GM23248 (cell line): ENCODE measurements at regions of chr2 and their contacts with region 1.

Region 1: DNA sequence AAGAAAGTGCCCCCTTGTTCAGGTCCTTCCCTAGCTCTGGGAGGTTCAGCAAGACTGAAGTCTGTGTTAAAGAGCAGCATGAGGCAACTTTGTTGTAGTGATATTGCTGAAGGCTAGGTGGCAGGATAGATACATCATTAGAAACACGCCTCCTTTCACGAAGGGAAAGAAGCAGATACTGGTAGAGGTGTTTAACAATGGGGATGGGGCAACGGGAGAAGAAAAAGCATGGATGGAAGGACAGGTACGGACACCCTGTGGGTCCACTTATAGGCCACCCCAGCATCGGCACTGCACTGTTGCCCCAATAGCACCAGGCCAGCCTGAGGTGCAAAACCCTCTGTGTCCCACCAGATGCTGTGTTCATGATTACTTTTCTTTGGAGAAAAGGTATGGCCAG is 3.5 kb upstream of the IGFBP5 start:
- DNase-seq: peak; percentile 85
- H3K4me3 ChIP-seq: no peak overlapping the region
- H3K27ac ChIP-seq: no peak overlapping the region
- H3K4me1 ChIP-seq: peaks cover 17% of the 10 kb centered on the region
- H3K27me3 ChIP-seq: no peaks in the 10 kb centered on the region

Region 2: DNA sequence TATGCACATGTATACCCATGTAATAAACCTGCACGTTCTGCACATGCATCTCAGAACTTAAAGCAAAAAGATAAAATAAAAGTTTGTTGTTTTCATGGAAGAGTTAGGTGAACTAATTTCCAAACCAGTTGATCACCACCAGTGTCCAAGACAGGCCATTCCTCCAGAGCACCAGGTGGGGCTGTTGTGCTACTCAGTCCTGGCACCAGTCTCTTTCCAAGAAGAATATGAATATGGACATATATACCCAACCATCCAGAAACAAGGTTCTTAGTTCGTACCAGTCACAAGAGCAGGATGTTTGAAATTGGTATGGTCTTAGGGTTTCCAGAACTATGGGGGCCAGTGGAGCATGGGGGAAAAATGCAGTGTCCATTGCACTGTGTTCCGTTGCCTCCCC is 178.2 kb after region 1 on chr2:
- in situ Hi-C with region 1: no loop called
- DNase-seq: no peak
- H3K4me3 ChIP-seq: no peak overlapping the region
- H3K27ac ChIP-seq: no peak overlapping the region
- H3K4me1 ChIP-seq: no peaks in the 10 kb centered on the region
- H3K27me3 ChIP-seq: no peaks in the 10 kb centered on the region

Region 3: DNA sequence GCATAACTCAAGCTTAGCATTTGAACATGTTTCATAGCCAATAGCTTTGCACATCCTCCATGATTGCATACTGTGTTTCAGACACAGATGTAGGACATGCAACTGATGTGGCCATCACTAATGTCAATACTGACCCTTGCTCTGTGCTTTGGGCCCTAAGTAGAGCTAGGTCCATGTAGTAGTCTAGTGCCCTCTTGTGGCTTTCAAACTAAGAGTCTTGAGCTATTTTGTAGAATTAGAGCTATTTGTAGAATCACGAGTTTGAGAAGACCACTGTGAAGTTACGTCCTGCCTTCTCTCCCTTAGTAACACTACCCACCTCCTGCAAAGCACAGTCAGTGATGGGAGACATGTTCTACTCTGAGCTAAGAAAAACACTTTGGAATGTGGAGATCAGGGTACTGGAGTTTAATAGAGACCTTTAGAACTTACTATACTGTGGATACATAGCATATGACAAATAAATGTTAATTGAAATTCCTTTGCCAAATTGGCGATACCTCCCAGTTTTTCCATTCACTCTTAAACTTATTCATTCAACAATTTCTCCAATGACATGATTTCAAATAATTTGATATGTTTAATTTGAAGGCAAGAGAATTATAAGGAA is 467.5 kb after region 1 on chr2:
- in situ Hi-C with region 1: loop called (anchors 10 kb)
- DNase-seq: peak; percentile 72
- H3K4me3 ChIP-seq: no peak overlapping the region
- H3K27ac ChIP-seq: no peak overlapping the region
- H3K4me1 ChIP-seq: peaks cover 8% of the 10 kb centered on the region
- H3K27me3 ChIP-seq: no peaks in the 10 kb centered on the region

Region 4: GRCh38 chr2:217261452-217261851 is 562.6 kb after region 1 on chr2:
- in situ Hi-C with region 1: no loop called
- DNase-seq: no peak
- H3K4me3 ChIP-seq: no peak overlapping the region
- H3K27ac ChIP-seq: no peak overlapping the region
- H3K4me1 ChIP-seq: no peaks in the 10 kb centered on the region
- H3K27me3 ChIP-seq: no peaks in the 10 kb centered on the region

Region 5: DNA sequence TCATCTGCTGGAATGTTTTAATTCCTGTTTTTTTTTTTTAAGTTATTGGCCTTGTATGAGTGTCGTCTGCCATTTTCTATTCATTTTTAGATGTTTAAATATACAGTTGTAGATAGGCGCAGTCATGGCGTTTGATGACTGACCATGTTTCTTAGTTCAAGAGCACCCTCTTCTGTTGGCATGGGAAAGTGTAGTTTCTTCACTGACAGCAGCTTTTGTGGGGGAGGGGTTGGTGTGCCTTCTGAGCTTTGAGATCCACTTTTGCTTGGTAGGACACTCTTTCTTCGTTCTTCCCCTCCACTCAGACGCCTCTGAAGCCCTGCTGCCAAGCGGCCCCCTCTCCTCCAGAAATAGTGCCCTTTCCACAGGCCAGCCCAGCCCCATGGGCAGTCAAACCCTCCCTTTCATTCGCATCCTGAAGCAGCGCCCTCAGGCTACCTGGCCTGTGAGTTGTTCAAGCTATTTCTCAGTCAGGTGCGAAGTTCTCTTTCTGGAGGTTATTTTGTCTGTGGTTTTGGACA is 811.9 kb after region 1 on chr2:
- in situ Hi-C with region 1: loop called (anchors 10 kb)
- DNase-seq: peak; percentile 91
- H3K4me3 ChIP-seq: no peak overlapping the region
- H3K27ac ChIP-seq: no peak overlapping the region
- H3K4me1 ChIP-seq: peaks cover 14% of the 10 kb centered on the region
- H3K27me3 ChIP-seq: no peaks in the 10 kb centered on the region

Region 6: DNA sequence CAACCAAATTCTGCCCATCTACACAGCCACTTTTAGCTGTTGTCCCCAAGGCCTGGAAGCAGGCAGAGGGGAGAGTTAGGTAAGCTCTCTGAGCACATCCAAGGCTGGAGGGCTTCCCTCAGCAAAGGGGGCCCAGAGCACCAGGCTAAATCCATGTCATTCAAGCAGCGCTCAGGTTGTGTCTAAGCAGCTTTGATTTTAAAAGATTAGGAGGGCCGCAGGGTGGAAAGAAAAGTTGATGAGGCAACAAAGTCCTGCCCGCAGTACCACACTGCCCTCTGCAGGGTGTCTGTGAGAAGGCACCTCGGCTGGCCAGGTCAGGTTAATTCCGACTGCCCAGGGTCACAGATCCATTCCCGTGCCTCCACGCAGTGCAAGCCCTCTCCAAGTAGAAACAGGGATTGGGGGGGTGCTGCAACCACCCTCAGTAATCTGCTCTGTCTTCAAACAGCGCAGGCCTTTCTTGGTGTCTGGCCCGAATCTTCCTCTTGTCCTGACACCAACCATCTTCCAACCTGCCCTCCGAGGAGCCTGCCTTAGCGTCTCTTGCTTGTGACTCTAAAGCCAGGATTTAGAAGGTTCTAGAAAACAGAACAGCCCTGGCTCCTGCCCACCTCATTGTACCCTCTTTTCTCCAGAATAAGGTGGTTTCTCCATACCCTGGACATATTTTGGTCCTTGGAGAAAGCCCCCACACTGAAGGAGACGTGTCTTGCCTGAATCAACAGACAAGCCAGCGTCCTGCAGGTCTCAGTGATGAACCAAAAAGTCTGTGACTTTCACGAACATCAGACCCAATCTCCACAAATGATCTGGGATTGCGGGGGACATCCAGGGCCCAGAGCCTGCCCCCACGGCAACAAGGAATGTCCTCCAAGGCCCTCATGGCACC is 1014.7 kb after region 1 on chr2:
- in situ Hi-C with region 1: loop called (anchors 5 kb)
- DNase-seq: peak; percentile 81
- H3K4me3 ChIP-seq: no peak overlapping the region
- H3K27ac ChIP-seq: peak overlapping the region; percentile 37; the same call in 1 of the 2 replicates
- H3K4me1 ChIP-seq: peaks cover 45% of the 10 kb centered on the region
- H3K27me3 ChIP-seq: no peaks in the 10 kb centered on the region